Lower leg skin (tissue), 4 donors: ENCODE measurements at regions of chr16 and their contacts with region 1.

Region 1: DNA sequence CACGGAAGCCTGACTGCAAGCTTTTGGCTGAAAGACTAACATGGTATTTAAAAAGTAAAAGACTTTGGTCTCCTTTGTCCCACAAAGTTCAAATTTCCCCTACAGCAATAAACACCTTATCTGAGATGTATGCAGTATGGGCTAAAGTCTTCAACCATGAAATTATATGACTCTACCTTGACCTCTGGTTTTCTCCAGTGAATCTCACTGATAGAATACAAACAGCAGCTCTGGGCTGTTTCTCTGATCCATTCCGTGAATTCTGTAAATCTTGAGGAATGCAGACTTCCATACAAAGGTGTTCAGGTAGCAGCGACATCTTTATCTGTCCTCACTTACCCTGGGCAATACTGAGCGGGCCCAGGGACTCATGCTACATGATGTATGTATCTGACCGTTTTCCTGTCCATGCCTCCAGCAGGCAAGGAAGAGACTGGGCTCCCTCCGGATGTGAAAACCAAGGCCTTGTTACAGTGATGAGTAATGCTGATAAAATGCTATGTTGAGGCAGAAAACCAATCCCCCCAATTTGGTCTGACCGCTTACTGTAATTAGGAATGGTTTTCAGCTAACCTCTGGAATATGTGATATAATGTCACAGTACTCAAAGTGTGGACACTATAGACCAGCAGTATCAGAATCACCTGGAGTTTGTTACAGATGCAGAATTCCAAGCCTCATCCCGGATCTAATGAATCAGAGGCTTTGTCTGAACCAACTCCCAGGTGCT is 589.8 kb downstream of the HS3ST4 start:
- DNase-seq: no peak
- H3K4me3 ChIP-seq: no peak overlapping the region
- CTCF ChIP-seq: no peak
- POLR2A ChIP-seq: no peak

Region 2: DNA sequence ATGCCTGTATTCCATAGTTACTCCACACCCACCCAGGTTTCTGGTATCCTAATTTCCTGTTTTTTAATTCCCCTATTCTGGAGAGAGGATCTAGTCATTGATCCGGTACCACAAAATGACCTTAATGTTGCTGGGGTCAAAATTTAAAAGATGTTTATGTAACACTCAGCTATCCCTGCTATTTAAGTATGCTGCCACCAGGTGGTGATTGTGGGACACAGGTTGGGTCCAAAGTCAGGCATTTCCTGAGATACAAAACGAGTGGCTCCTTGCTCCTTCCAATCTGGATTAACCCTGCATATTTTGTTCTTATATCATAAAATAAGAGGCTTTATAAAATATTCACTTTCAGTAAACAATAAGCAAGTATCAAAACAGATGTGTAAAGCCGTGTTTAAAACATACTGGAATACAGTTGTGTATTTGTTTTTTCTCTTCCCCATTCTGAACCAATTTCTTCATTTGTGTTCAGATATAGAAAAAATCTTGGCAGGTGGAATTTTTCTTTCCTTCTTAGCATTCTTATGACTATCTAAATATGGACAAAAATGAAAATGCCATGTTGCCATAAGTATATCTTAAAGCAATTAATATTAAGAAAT is 573.5 kb before region 1 on chr16:
- intact Hi-C with region 1: loop called (anchors 5 kb)
- DNase-seq: no peak
- H3K4me3 ChIP-seq: no peak overlapping the region
- CTCF ChIP-seq: no peak
- POLR2A ChIP-seq: no peak

Region 3: GRCh38 chr16:26345966-26346365 is 64.4 kb after region 1 on chr16:
- intact Hi-C with region 1: loop called (anchors 10 kb)
- DNase-seq: no peak
- H3K4me3 ChIP-seq: no peak overlapping the region
- CTCF ChIP-seq: no peak
- POLR2A ChIP-seq: no peak

Region 4: GRCh38 chr16:26777821-26778220 is 496.3 kb after region 1 on chr16:
- intact Hi-C with region 1: loop called (anchors 2 kb)
- DNase-seq: no peak
- H3K4me3 ChIP-seq: no peak overlapping the region
- CTCF ChIP-seq: no peak
- POLR2A ChIP-seq: no peak